ENCODE measurements at regions of chr5 and their contacts with region 1.

Region 1: GRCh38 chr5:139787568-139788293 is 7.9 kb upstream of the PSD2 start:
- DNase-seq: peak; percentile 69 to 95 (median 84)
- ATAC-seq: peak; percentile 91
- H3K4me3 ChIP-seq: peak overlapping the region; percentile 58 to 63
- H3K4me3 Mint-ChIP-seq: peak overlapping the region; percentile 83
- H3K27ac ChIP-seq: no peak overlapping the region
- H3K27ac Mint-ChIP-seq: no peak overlapping the region
- H3K4me1 ChIP-seq: peaks cover 4% of the 10 kb centered on the region
- H3K4me1 Mint-ChIP-seq: peaks cover 6% of the 10 kb centered on the region
- H3K27me3 ChIP-seq: peaks cover 0 to 9% of the 10 kb centered on the region in 2 experiments
- H3K27me3 Mint-ChIP-seq: peaks cover 26% of the 10 kb centered on the region
- CTCF ChIP-seq: peak; percentile 96

Region 2: DNA sequence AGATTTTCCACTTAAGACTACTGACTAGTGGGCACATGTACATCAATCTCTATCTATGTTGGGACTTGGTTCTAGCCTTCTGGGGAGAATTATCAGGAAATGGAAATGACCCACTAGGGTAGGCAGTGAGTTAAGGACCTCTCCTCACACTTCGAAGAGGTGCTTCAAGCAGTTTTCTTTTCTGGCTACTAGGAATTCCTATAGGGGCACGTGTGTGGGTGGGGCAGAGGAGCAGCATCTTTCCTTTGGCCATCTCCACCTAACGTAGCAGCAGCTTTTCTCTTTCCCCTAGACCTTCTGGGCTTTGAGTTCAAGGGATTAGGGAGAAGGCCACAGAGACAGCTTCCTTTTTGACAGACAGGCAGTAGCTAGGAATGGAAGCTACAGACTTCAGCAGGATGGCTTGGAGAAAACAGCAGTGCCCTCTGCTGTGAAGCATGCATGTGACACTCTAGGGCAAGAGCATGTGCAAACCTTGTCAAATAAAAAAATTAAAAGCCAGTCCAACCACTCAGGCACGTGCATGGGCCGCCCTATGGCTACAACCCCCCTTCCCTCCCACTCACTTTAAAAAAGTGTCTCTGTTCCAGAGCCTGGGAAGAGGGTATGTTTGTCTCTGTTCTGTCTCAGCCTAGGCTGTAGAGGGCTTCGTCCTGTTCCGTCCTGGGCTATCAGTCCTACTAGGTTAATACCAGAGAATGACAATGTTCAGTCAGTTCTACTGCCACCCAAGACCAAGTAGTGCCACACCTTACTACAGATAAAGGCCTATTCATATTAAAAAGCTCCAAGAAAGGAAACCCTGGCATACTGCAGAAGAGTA is 1504.6 kb before region 1 on chr5:
- CTCF ChIA-PET with region 1: no interaction called
- POLR2A ChIA-PET with region 1: no interaction called
- intact Hi-C with region 1: no loop called
- DNase-seq: peak in 2 of 9 experiments; percentile 10 to 19
- ATAC-seq: no peak
- H3K4me3 ChIP-seq: no peak overlapping the region
- H3K4me3 Mint-ChIP-seq: no peak overlapping the region
- H3K27ac ChIP-seq: no peak overlapping the region
- H3K27ac Mint-ChIP-seq: no peak overlapping the region
- H3K4me1 ChIP-seq: no peaks in the 10 kb centered on the region
- H3K4me1 Mint-ChIP-seq: no peaks in the 10 kb centered on the region
- H3K27me3 ChIP-seq: no peaks in the 10 kb centered on the region
- H3K27me3 Mint-ChIP-seq: no peaks in the 10 kb centered on the region
- CTCF ChIP-seq: no peak

Region 3: GRCh38 chr5:139293504-139294373 is 494.0 kb before region 1 on chr5 and contains the start of gene MATR3:
- CTCF ChIA-PET with region 1: no interaction called
- POLR2A ChIA-PET with region 1: no interaction called
- intact Hi-C with region 1: no loop called
- DNase-seq: peak; percentile 88 to 95 (median 93)
- ATAC-seq: peak; percentile 90
- H3K4me3 ChIP-seq: peak within 1 kb of the TSS; percentile 72 to 94
- H3K4me3 Mint-ChIP-seq: peak within 1 kb of the TSS; percentile 98
- H3K27ac ChIP-seq: peak within 1 kb of the TSS; percentile 98
- H3K27ac Mint-ChIP-seq: peak within 1 kb of the TSS; percentile 98
- H3K4me1 ChIP-seq: peaks cover 34% of the 10 kb centered on the region
- H3K4me1 Mint-ChIP-seq: peaks cover 41% of the 10 kb centered on the region
- H3K27me3 ChIP-seq: no peaks in the 10 kb centered on the region
- H3K27me3 Mint-ChIP-seq: no peaks in the 10 kb centered on the region
- CTCF ChIP-seq: no peak
- total RNA-seq, gene MATR3: 420 to 430 TPM

Region 4: DNA sequence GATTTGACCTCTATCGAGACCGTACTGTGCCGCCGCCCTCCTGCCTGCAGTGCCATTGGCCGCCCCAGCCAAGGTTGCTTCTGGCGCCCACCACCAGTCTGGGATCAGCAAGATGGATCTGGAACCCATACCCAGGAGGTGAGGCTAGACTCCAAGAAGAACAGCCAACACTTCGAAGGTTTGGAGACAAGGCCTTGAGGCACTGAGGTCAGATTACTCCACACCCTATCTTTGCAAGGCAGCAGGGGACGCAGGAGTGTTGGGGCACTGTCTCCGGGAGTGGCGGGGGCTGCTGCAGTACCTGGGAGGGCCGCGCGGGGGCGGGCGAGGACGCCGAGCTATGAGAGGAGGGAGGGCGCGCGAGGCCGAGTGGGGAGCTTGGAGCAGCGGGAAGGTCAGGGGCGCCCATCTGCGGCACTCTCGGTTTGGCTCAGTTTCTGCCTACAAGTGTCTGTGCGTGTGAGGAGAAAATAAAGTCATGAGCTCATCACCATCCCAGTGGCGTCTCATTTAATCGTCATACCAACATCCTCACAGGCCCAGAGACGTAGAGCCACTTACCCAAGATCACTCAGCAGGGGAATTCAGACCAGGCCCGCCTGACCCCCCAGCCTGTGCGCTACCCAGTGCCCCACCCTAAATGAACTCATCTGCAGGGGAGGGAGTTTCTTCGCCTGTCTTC is 12.6 kb before region 1 on chr5:
- CTCF ChIA-PET with region 1: interaction called, 47 read pairs
- POLR2A ChIA-PET with region 1: interaction called, 3 read pairs
- intact Hi-C with region 1: no loop called
- DNase-seq: peak; percentile 63 to 87 (median 79)
- ATAC-seq: peak; percentile 100
- H3K4me3 ChIP-seq: no peak overlapping the region
- H3K4me3 Mint-ChIP-seq: peak overlapping the region; percentile 29
- H3K27ac ChIP-seq: no peak overlapping the region
- H3K27ac Mint-ChIP-seq: no peak overlapping the region
- H3K4me1 ChIP-seq: no peaks in the 10 kb centered on the region
- H3K4me1 Mint-ChIP-seq: peaks cover 7% of the 10 kb centered on the region
- H3K27me3 ChIP-seq: no peaks in the 10 kb centered on the region
- H3K27me3 Mint-ChIP-seq: peaks cover 2% of the 10 kb centered on the region
- CTCF ChIP-seq: peak; percentile 89

Region 5: DNA sequence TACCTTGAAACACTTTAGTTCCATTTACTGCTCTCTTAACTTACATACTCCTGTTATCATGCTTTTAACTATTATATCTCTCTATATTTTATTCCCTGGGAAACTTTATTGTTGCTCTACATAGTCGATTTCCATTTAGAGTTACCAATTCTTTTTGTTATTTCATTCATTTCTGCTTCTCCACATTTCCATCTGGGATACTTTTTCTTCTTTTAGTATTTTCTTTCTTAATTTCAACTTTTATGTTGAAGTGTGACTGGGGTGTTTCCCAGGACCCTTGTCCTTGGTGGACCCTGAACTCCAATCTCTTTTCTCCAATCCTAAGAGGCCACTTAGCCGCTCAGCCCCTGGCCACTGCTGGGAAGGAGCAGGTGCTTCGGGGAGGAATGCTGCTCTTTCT is 43.9 kb after region 1 on chr5:
- CTCF ChIA-PET with region 1: no interaction called
- POLR2A ChIA-PET with region 1: no interaction called
- intact Hi-C with region 1: no loop called
- DNase-seq: no peak
- ATAC-seq: no peak
- H3K4me3 ChIP-seq: no peak overlapping the region
- H3K4me3 Mint-ChIP-seq: no peak overlapping the region
- H3K27ac ChIP-seq: no peak overlapping the region
- H3K27ac Mint-ChIP-seq: no peak overlapping the region
- H3K4me1 ChIP-seq: no peaks in the 10 kb centered on the region
- H3K4me1 Mint-ChIP-seq: no peaks in the 10 kb centered on the region
- H3K27me3 ChIP-seq: no peaks in the 10 kb centered on the region
- H3K27me3 Mint-ChIP-seq: peaks cover 26% of the 10 kb centered on the region
- CTCF ChIP-seq: no peak

Region 6: DNA sequence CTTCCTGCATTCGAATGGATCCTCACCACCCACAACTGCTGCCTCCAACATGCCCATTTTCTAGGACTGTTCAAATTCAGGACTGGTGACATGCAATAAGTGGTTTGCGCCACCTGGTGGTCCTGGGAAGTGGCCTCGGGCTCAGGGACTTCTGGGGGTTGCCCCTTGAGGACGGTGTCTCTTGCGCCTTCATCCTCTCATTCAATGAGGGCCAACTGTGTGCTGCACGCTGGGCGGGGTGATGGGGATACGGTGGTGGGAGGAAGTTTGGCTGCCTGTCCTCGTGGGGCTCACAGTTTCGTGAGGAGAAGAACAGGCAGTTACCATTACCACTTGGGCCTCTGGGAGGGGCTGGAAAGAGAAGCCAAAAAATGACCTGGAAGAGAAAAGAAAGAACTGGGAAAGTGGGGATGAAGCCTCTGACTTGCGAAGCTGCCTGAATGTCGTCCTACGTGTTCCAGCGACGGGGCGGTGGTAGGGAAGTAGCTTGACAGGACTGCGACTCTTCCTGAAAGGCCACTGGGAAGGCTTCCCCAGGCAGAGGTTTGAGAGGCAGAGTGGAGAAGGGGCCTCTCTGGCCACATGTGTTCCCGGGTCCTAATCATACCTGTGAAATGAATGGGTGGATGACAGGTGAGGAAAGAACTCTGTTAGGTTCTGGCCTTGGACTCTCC is 56.9 kb after region 1 on chr5:
- CTCF ChIA-PET with region 1: interaction called, 80 read pairs
- POLR2A ChIA-PET with region 1: interaction called, 4 read pairs
- intact Hi-C with region 1: loop called (anchors 1 kb)
- DNase-seq: peak; percentile 50 to 83 (median 77)
- ATAC-seq: peak; percentile 24
- H3K4me3 ChIP-seq: no peak overlapping the region
- H3K4me3 Mint-ChIP-seq: no peak overlapping the region
- H3K27ac ChIP-seq: no peak overlapping the region
- H3K27ac Mint-ChIP-seq: no peak overlapping the region
- H3K4me1 ChIP-seq: no peaks in the 10 kb centered on the region
- H3K4me1 Mint-ChIP-seq: peaks cover 15% of the 10 kb centered on the region
- H3K27me3 ChIP-seq: no peaks in the 10 kb centered on the region
- H3K27me3 Mint-ChIP-seq: peaks cover 18% of the 10 kb centered on the region
- CTCF ChIP-seq: peak; percentile 76

Region 7: DNA sequence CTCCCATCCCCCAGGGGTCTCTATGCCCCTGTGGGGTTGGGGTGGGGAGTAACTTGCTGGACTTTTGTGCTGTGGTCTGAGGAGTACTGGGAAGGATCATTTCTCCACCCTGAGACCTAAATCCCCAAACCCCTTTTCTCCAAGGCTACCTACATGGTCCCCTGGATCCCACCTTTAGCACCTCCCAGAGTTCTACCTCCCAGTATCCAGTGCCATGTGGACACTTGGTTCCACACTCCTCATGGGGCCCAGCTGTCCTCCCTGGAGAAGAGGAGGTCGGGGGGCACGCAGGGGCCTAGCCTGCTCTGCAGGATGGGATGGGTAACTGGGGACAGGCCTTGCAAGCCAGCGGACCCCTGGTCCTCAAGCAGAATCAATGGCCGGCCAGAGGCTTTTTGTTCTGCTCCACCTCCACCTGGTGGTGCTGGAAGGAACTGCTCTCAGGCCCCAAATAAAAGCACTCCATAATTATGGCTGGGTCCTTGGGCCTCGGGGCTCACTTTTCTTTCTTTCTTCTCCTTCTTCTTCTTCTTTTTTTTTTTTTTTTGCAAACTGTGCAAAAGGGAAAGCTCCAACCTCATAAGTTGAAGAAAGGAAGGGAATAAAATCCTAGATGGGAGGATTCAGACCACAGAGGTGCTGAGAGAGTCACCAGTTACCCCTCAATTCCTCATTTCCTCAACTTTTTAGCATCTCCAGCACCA is 76.3 kb after region 1 on chr5:
- CTCF ChIA-PET with region 1: interaction called, 74 read pairs
- POLR2A ChIA-PET with region 1: no interaction called
- intact Hi-C with region 1: loop called in 1 of 2 experiments (anchors 1 kb)
- DNase-seq: peak; percentile 16 to 69 (median 59)
- ATAC-seq: peak; percentile 70
- H3K4me3 ChIP-seq: no peak overlapping the region
- H3K4me3 Mint-ChIP-seq: no peak overlapping the region
- H3K27ac ChIP-seq: no peak overlapping the region
- H3K27ac Mint-ChIP-seq: no peak overlapping the region
- H3K4me1 ChIP-seq: no peaks in the 10 kb centered on the region
- H3K4me1 Mint-ChIP-seq: no peaks in the 10 kb centered on the region
- H3K27me3 ChIP-seq: no peaks in the 10 kb centered on the region
- H3K27me3 Mint-ChIP-seq: peaks cover 10% of the 10 kb centered on the region
- CTCF ChIP-seq: peak; percentile 85

Region 8: GRCh38 chr5:139872052-139872766 is 84.5 kb after region 1 on chr5:
- CTCF ChIA-PET with region 1: interaction called, 31 read pairs
- POLR2A ChIA-PET with region 1: no interaction called
- intact Hi-C with region 1: no loop called
- DNase-seq: no peak
- ATAC-seq: no peak
- H3K4me3 ChIP-seq: no peak overlapping the region
- H3K4me3 Mint-ChIP-seq: no peak overlapping the region
- H3K27ac ChIP-seq: no peak overlapping the region
- H3K27ac Mint-ChIP-seq: no peak overlapping the region
- H3K4me1 ChIP-seq: no peaks in the 10 kb centered on the region
- H3K4me1 Mint-ChIP-seq: no peaks in the 10 kb centered on the region
- H3K27me3 ChIP-seq: no peaks in the 10 kb centered on the region
- H3K27me3 Mint-ChIP-seq: peaks cover 12% of the 10 kb centered on the region
- CTCF ChIP-seq: no peak

Region 9: GRCh38 chr5:140157032-140157803 is 369.5 kb after region 1 on chr5:
- CTCF ChIA-PET with region 1: interaction called, 4 read pairs
- POLR2A ChIA-PET with region 1: no interaction called
- intact Hi-C with region 1: loop called (anchors 1 kb)
- DNase-seq: peak; percentile 74 to 91 (median 87)
- ATAC-seq: peak; percentile 100
- H3K4me3 ChIP-seq: no peak overlapping the region
- H3K4me3 Mint-ChIP-seq: peak overlapping the region; percentile 46
- H3K27ac ChIP-seq: no peak overlapping the region
- H3K27ac Mint-ChIP-seq: no peak overlapping the region
- H3K4me1 ChIP-seq: peaks cover 4% of the 10 kb centered on the region
- H3K4me1 Mint-ChIP-seq: peaks cover 6% of the 10 kb centered on the region
- H3K27me3 ChIP-seq: no peaks in the 10 kb centered on the region
- H3K27me3 Mint-ChIP-seq: peaks cover under 1% of the 10 kb centered on the region
- CTCF ChIP-seq: peak; percentile 81